ENCODE measurements at regions of chr6 and their contacts with region 1.

Region 1: GRCh38 chr6:135909737-135910387 is 58.4 kb downstream of the PDE7B start:
- DNase-seq: peak; percentile 73

Region 2: DNA sequence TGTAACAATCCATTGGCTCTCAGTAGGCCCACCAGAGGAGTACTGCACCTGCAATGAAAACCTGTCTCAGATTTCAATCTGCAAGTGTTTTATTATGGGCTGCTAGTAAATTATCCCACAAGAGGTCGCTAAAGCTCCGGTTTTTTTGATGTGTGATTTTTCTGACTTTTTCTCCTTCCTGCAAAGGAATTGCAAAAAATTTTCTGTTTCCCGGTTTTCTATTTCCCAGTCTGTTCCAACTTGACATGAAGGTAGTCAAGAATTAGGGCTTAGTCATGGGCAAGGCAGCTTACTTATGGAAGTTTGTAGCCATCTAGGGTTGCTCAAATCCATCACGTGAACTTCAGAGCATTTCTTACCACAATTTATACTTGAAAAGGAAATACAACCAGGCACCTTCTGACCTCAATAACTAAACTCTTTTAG is 373.9 kb before region 1 on chr6:
- CTCF ChIA-PET with region 1: interaction called, 12 read pairs
- POLR2A ChIA-PET with region 1: no interaction called
- DNase-seq: peak; percentile 66

Region 3: DNA sequence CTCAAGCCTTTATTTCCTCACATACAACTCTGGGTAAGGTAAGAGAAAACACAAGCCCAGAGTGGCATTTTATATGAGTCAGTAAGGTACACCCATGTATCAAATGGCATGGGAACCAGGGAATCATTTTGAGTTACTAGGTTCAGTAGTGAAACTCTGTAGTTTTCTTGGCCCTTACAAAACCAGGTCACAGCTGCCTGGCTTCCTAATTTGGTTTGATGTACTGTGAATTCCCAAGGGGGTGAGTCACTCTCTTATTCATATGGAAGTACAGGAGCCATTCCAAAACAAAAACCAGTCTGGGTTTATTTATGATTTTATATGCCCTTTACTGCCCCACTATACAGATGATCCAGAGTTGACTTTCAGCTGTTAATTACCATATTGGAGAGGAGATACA is 12.3 kb after region 1 on chr6:
- CTCF ChIA-PET with region 1: interaction called, 14 read pairs
- POLR2A ChIA-PET with region 1: no interaction called
- DNase-seq: peak; percentile 30